Endothelial cell of umbilical vein (primary cell): ENCODE measurements at regions of chr10 and their contacts with region 1.

Region 1: GRCh38 chr10:16777473-16778370 is 39.5 kb downstream of the RSU1 start:
- DNase-seq: peak; percentile 97
- H3K4me3 ChIP-seq: peak overlapping the region in 1 of 3 experiments; percentile 38
- H3K27ac ChIP-seq: peak overlapping the region; percentile 75
- H3K4me1 ChIP-seq: peaks cover 22% of the 10 kb centered on the region
- H3K27me3 ChIP-seq: no peaks in the 10 kb centered on the region
- CTCF ChIP-seq: peak; percentile 43 to 58
- POLR2A ChIP-seq: no peak

Region 2: GRCh38 chr10:15898046-15898445 is 879.7 kb before region 1 on chr10:
- CTCF ChIA-PET with region 1: interaction called, 60 read pairs
- POLR2A ChIA-PET with region 1: no interaction called
- dilution Hi-C with region 1: no loop called
- intact Hi-C with region 1: loop called (anchors 1 kb)
- DNase-seq: peak; percentile 18
- H3K4me3 ChIP-seq: no peak overlapping the region
- H3K27ac ChIP-seq: no peak overlapping the region
- H3K4me1 ChIP-seq: peaks cover 12% of the 10 kb centered on the region
- H3K27me3 ChIP-seq: peaks cover 1 to 16% of the 10 kb centered on the region in 2 experiments
- CTCF ChIP-seq: peak; percentile 15 to 20
- POLR2A ChIP-seq: no peak

Region 3: DNA sequence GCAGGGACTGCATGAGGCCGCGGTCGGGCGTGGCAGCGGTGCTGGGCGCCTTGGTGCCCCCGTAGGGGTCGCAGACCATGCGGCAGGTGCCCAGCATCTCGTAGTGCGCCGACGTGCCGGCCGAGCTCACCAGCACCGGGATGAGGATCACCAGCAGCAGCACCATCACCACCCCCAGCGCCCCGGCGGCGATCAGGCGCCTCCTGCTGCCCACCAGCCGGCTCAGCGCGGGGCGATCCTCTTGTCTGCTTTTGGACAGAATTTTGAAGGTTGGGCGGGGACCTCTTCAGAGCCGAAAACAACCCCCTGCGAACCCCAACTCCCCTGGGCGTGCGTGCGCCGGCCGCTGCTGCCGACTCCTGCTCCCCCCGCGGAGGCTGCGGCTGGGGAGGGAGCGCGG is 256.8 kb before region 1 on chr10:
- CTCF ChIA-PET with region 1: interaction called, 7 read pairs
- POLR2A ChIA-PET with region 1: no interaction called
- dilution Hi-C with region 1: no loop called
- intact Hi-C with region 1: loop called (anchors 2 kb)
- DNase-seq: no peak
- H3K4me3 ChIP-seq: peak overlapping the region in 2 of 3 experiments; percentile 25 to 43
- H3K27ac ChIP-seq: no peak overlapping the region
- H3K4me1 ChIP-seq: peaks cover 12% of the 10 kb centered on the region
- H3K27me3 ChIP-seq: peaks cover 40 to 76% of the 10 kb centered on the region in 2 experiments
- CTCF ChIP-seq: peak; percentile 7 to 53
- POLR2A ChIP-seq: no peak

Region 4: GRCh38 chr10:16597656-16598055 is 180.1 kb before region 1 on chr10:
- CTCF ChIA-PET with region 1: no interaction called
- POLR2A ChIA-PET with region 1: no interaction called
- dilution Hi-C with region 1: no loop called
- intact Hi-C with region 1: loop called (anchors 10 kb)
- DNase-seq: peak; percentile 6
- H3K4me3 ChIP-seq: no peak overlapping the region
- H3K27ac ChIP-seq: no peak overlapping the region
- H3K4me1 ChIP-seq: no peaks in the 10 kb centered on the region
- H3K27me3 ChIP-seq: no peaks in the 10 kb centered on the region
- CTCF ChIP-seq: no peak
- POLR2A ChIP-seq: no peak

Region 5: DNA sequence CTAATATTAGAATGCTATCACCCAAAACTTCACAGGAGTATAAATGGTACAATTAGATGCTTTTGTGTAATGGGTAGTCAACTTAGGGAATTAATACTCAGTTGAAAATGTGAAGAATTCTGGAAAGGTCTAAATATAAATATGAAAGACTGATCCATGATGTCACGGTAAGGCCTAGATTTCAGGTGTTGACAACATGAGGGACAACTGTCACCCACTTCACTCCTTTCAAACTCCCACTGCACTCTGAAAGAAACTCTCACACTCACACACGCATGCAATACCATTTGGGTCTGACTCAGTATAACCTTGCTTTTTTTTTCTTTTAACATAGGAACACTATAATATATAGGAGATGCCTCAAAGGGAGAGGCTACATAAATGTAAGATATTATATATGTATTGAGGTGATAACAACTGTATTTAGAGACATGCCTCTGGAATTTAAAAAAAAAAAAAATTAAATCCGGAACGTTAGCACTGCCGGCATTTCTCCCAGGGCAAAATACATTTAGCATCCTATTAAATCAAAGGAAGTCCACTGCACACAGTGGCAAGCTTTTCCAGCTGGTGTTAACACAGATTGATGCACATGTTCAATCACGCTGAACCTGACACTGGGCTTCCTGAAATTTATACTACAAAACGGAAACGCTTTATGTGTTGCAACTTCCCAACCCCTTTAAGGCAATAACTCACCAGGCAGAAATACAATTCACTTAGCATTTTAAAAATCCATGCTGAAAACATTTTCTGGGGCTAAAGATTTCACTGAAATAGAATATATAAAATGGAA is 35.4 kb before region 1 on chr10:
- CTCF ChIA-PET with region 1: no interaction called
- POLR2A ChIA-PET with region 1: no interaction called
- dilution Hi-C with region 1: no loop called
- intact Hi-C with region 1: loop called (anchors 1 kb)
- DNase-seq: peak; percentile 88
- H3K4me3 ChIP-seq: no peak overlapping the region
- H3K27ac ChIP-seq: no peak overlapping the region
- H3K4me1 ChIP-seq: peaks cover 17% of the 10 kb centered on the region
- H3K27me3 ChIP-seq: no peaks in the 10 kb centered on the region
- CTCF ChIP-seq: no peak
- POLR2A ChIP-seq: no peak

Region 6: GRCh38 chr10:16792675-16793074 is 15.0 kb after region 1 on chr10:
- CTCF ChIA-PET with region 1: interaction called, 12 read pairs
- POLR2A ChIA-PET with region 1: no interaction called
- dilution Hi-C with region 1: no loop called
- intact Hi-C with region 1: no loop called
- DNase-seq: no peak
- H3K4me3 ChIP-seq: no peak overlapping the region
- H3K27ac ChIP-seq: no peak overlapping the region
- H3K4me1 ChIP-seq: no peaks in the 10 kb centered on the region
- H3K27me3 ChIP-seq: no peaks in the 10 kb centered on the region
- CTCF ChIP-seq: no peak
- POLR2A ChIP-seq: no peak

Region 7: GRCh38 chr10:16856567-16856966 is 78.8 kb after region 1 on chr10:
- CTCF ChIA-PET with region 1: no interaction called
- POLR2A ChIA-PET with region 1: no interaction called
- dilution Hi-C with region 1: no loop called
- intact Hi-C with region 1: no loop called
- DNase-seq: peak; percentile 66
- H3K4me3 ChIP-seq: no peak overlapping the region
- H3K27ac ChIP-seq: peak overlapping the region; percentile 12
- H3K4me1 ChIP-seq: peaks cover 23% of the 10 kb centered on the region
- H3K27me3 ChIP-seq: no peaks in the 10 kb centered on the region
- CTCF ChIP-seq: no peak
- POLR2A ChIP-seq: no peak